Endothelial cell of umbilical vein (primary cell): ENCODE measurements at regions of chr22 and their contacts with region 1.

Region 1: DNA sequence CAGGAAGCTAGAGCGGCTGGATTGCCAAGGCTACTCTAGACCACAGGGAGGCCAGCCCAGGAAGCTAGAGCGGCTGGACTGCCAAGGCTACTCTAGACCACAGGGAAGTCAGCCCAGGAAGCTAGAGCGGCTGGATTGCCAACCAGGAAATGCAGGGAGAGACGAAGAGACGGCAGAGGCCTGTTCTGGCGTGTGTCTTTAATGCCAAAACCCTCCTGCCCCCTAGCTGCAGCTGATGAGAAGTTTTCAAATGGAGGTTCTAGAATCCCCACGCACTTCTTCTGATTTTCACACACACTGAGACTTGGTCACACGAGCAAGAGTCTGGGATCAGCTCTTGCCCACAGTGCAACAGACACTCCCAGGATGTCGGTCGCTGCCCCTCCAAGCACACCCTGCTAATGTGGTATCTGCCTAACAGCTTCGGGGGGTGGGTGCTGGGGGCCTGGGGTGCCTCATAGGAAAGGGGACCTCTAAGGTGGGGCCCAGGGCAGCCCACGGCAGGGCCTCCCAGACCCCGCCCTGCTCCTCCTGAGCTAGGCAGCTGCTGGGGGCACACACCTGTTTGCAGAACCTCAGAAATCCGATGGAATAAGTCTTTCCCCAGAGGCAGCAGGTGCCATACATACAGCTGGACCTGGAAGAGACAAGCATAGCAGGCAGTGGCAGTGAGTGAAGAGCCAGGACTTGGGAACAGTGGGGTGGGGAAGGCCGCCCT is 28.5 kb downstream of the MAFF start:
- DNase-seq: peak; percentile 85
- H3K4me3 ChIP-seq: no peak overlapping the region
- H3K27ac ChIP-seq: peak overlapping the region; percentile 77
- H3K4me1 ChIP-seq: peaks cover 41% of the 10 kb centered on the region
- H3K27me3 ChIP-seq: no peaks in the 10 kb centered on the region
- CTCF ChIP-seq: peak; percentile 59 to 70
- POLR2A ChIP-seq: no peak

Region 2: DNA sequence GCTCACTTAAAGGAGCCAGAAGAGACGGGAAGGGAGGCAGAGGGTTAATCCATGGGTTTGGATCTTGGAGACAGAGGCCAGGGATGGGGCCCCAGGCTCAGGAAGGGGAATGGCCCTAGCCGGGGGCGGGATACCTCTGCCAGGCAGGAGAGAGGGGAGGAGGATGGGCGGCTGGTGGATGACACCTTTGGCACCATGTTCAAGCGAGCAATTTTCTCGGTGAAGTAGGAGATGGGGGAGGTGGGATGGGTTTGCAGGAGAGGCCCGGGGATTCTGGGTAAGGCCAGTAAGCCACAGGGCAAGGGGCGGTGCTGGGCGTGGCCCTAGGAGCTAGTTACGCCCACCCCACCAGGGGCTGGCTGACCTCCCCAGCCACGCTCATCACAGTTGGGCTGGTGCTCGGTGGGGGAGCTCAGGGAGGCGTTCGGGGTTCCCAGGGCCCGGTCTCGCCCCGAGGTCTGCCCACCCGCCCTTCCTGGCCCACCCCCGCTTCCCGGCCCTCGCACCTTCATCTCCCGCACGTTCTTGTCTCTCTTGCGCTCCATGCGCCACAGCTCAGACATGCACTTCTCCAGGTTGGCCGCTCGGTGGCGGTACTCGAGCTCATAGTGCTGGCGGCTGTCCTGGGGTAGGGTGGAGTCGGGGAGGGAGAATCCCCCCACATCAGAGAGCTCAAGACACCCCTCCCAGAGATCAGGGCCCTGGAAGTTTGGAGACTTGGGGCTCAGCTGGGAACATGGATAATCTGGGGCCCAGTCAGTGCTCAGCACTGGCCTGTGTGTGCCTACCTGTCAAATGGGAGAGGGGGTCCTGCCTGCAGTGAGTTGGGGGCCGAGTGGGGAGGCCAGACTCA is 132.5 kb before region 1 on chr22:
- CTCF ChIA-PET with region 1: interaction called, 10 read pairs
- POLR2A ChIA-PET with region 1: no interaction called
- dilution Hi-C with region 1: no loop called
- intact Hi-C with region 1: no loop called
- DNase-seq: peak; percentile 12
- H3K4me3 ChIP-seq: no peak overlapping the region
- H3K27ac ChIP-seq: no peak overlapping the region
- H3K4me1 ChIP-seq: peaks cover 10% of the 10 kb centered on the region
- H3K27me3 ChIP-seq: peaks cover 0 to 3% of the 10 kb centered on the region in 2 experiments
- CTCF ChIP-seq: peak; percentile 36 to 60
- POLR2A ChIP-seq: no peak

Region 3: DNA sequence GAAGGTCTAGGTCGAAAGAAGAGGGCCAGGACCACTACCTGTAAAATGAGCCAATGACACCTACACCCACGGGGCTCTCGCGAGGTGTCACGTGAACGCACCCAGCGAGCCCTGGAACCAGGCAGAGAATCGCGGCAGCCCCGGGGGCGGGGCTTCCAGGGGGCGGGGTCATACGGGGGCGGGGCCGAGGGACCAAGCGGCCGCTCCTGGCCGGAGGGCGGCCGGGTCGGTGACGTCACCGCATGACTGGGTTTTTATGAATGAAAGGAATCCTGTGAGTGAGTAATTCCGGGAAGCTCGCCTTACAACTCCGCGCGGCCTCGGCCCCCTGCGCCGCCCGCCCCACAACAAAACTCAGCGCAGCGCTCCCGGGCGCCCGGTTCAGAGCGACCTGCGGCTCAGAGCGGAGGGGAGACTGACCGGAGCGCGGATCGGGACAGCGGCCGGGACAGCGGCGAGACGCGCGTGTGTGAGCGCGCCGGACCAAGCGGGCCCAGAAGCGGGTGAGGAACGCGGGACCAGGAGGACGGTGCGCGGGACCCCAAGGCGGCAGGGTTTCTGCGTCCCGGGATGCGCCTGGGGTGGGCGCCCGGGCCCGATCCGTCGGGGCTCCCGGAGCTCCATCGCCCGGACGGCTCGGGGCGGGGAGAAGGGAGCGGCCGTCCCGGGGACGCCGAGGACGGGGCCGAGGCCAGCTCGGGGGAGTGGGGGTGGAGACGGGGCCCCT is 28.4 kb before region 1 on chr22 and contains the start of gene MAFF:
- CTCF ChIA-PET with region 1: interaction called, 22 read pairs
- POLR2A ChIA-PET with region 1: no interaction called
- dilution Hi-C with region 1: no loop called
- intact Hi-C with region 1: loop called (anchors 1 kb)
- DNase-seq: peak; percentile 97
- H3K4me3 ChIP-seq: peak within 1 kb of the TSS; percentile 70 to 92 (median 87)
- H3K27ac ChIP-seq: peak within 1 kb of the TSS; percentile 92
- H3K4me1 ChIP-seq: peaks cover 24% of the 10 kb centered on the region
- H3K27me3 ChIP-seq: no peaks in the 10 kb centered on the region
- CTCF ChIP-seq: no peak
- POLR2A ChIP-seq: peak; percentile 93
- total RNA-seq, gene MAFF: 59.5 and 61.2 TPM in 2 replicates

Region 4: GRCh38 chr22:38240734-38241252 is 10.5 kb after region 1 on chr22:
- CTCF ChIA-PET with region 1: interaction called, 41 read pairs
- POLR2A ChIA-PET with region 1: no interaction called
- dilution Hi-C with region 1: no loop called
- intact Hi-C with region 1: loop called (anchors 1 kb)
- DNase-seq: peak; percentile 94
- H3K4me3 ChIP-seq: no peak overlapping the region
- H3K27ac ChIP-seq: peak overlapping the region; percentile 74
- H3K4me1 ChIP-seq: peaks cover 31% of the 10 kb centered on the region
- H3K27me3 ChIP-seq: no peaks in the 10 kb centered on the region
- CTCF ChIP-seq: no peak
- POLR2A ChIP-seq: no peak

Region 5: DNA sequence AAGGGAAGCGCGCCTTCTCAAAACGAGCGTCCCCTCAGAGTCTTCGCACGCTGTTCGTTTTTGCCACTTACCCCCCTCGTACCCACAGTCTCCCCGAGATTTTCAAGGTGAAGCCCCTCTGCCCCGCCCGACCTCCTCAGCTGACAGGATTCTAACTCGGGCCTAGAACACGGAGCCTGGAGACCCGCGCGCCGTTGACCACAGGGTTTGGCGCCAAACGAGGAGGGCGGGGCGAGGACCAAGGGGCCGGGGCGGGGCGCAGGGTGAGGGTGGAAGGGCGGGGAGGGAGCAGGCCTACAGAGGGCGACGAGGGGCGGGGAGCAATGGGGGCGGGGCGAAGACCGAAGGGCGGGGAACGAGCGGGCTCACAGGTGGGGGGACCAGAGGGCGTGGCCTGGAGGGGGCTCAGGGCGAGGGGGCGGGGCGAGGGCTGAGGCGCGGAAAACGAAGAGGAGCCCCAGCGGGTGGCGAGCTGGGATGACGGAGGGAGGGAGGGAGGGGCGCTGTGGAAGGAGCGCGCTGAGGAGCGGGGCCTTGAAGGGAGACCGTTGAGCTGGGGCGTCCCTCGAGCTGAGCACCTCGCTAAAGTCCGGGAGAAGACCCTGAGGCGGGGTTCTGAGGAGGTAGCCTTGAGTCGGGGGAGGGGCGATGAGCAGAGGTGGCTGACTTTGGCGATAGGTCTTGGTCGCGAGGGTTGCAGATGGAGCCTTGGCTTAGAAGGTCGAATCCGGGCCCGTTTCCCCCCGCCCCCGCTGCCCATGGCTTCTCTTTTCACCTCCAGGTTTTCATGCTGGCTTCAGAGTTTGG is 339.9 kb after region 1 on chr22 and contains the start of gene DMC1:
- CTCF ChIA-PET with region 1: no interaction called
- POLR2A ChIA-PET with region 1: no interaction called
- dilution Hi-C with region 1: no loop called
- intact Hi-C with region 1: loop called (anchors 10 kb)
- DNase-seq: peak; percentile 69
- H3K4me3 ChIP-seq: peak within 1 kb of the TSS; percentile 19 to 75 (median 60)
- H3K27ac ChIP-seq: no peak within 1 kb of the TSS
- H3K4me1 ChIP-seq: peaks cover 7% of the 10 kb centered on the region
- H3K27me3 ChIP-seq: peaks cover 0 to 2% of the 10 kb centered on the region in 2 experiments
- CTCF ChIP-seq: no peak
- POLR2A ChIP-seq: no peak
- total RNA-seq, gene DMC1: 0.91 and 1.1 TPM in 2 replicates